ENCODE measurements at regions of chr11 and their contacts with region 1.

Region 1: DNA sequence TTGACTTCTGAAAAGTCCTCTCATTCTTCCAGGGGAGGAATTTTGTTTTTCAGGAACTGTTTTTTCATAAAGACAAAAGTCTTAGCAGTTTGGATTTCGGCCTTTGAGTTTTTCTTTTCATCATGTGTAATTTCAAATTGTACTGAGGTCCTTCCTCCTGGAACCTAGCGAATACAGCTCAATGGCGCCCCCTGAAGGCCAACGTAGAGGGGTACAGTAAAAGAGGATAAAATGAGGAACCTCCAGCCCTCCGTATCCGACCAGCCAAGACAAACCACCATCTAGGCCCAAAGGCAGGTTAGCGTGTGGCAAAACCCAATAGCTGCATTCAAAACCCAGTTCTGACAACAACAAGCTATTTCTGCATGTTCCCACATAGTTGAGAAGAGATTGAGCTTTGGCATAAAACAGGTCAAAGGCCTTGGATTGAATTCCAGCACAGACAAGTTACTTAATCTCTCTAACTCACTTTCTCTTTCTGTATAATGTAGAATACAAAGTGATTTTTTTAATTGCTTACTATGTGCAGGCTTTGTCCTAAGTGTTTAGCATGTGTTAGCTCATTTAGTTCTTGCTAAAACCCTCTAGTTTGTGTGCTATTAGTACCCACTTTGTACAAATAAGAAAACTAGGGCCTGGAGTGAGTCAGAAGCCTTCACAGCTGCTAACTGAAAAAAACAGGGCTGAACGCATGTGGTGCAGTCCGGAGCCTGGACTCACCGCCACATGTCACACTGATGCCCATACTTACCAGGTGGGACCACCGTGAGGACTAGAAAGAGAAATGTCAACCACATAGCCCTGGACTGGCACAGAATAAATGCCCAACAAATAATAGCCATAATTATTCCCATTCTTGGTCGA is 43.2 kb upstream of the ETS1 start:
- DNase-seq: peak; percentile 96
- ATAC-seq: peak; percentile 87
- H3K4me3 ChIP-seq: peak overlapping the region in 2 of 5 experiments; percentile 3 to 11
- H3K4me3 Mint-ChIP-seq: peak overlapping the region; percentile 65
- H3K27ac ChIP-seq: peak overlapping the region; percentile 43 to 90
- H3K27ac Mint-ChIP-seq: peak overlapping the region; percentile 93
- H3K4me1 ChIP-seq: peaks cover 66 to 68% of the 10 kb centered on the region in 2 donors
- H3K4me1 Mint-ChIP-seq: peaks cover 66% of the 10 kb centered on the region
- H3K27me3 ChIP-seq: no peaks in the 10 kb centered on the region
- H3K27me3 Mint-ChIP-seq: no peaks in the 10 kb centered on the region
- CTCF ChIP-seq: peak; percentile 86

Region 2: DNA sequence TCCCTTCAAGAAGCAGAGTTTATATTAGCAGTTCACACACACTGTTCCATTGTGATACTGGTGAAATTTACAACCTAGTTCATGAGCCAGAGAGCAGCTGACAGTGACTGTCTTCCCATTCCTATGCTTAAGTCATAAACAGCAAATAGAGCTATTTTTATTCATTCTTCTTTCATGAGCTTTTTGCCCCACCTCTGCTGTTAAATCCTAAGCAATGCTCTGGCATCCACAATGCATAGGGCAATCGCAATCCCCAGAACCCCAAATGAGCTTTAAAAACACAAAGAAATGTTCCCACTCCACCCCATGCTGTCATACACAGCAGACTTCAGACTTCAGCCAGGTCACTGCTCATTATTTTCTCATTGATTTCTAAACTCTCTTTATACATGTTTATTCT is 350.7 kb before region 1 on chr11:
- CTCF ChIA-PET with region 1: interaction called, 15 read pairs
- POLR2A ChIA-PET with region 1: no interaction called
- intact Hi-C with region 1: no loop called
- DNase-seq: no peak
- ATAC-seq: no peak
- H3K4me3 ChIP-seq: no peak overlapping the region
- H3K4me3 Mint-ChIP-seq: no peak overlapping the region
- H3K27ac ChIP-seq: no peak overlapping the region
- H3K27ac Mint-ChIP-seq: no peak overlapping the region
- H3K4me1 ChIP-seq: peaks cover 7 to 13% of the 10 kb centered on the region in 2 donors
- H3K4me1 Mint-ChIP-seq: peaks cover 17% of the 10 kb centered on the region
- H3K27me3 ChIP-seq: no peaks in the 10 kb centered on the region
- H3K27me3 Mint-ChIP-seq: no peaks in the 10 kb centered on the region
- CTCF ChIP-seq: no peak

Region 3: DNA sequence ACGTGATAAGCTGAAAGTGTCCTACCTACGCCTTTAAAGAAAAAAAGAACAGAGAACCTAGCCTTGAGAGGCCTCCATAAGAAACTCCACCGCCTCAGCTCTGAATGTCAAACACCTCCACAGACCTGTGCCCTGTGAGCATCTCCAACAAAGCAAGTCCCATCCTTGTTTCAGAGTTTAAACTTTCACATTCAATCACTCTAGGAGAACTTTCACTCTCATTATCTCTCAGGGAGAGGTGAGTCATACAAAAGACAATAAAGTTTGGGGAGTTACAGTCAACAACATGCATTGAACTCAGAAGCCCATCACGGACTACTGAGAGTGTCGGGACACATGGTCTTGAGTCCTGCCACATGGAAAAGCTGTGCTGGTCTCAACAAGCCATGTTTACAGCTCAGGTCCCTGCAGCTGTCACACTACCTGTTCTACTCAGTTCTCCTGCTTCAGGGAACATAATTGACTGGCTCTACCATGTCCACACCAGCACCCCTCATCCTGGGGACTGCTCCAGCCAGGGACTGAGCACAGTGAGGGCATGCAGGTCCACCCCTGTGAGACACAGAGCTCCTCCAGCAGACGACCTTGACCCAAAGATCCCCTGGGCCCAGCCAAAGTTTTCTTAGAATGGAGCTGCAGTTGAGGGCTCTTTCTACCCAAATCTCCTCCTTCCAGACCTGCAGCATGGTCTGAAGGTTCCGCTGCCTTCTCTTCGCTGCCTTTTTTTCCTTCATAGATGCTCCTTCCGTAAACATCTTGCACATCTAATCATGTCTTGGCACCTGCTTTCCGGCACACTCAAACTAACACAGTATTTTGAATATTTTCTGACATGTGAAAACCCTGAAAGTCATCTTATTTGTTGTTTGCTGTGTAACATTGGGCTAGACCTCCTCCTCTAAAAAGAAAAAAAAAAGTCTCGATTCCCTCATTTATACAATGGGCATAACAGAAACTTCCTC is 158.2 kb before region 1 on chr11:
- CTCF ChIA-PET with region 1: interaction called, 40 read pairs
- POLR2A ChIA-PET with region 1: interaction called, 14 read pairs
- intact Hi-C with region 1: loop called (anchors 2 kb)
- DNase-seq: peak; percentile 57
- ATAC-seq: peak; percentile 9
- H3K4me3 ChIP-seq: peak overlapping the region in 2 of 5 experiments; percentile 15 to 54
- H3K4me3 Mint-ChIP-seq: peak overlapping the region; percentile 71
- H3K27ac ChIP-seq: peak overlapping the region; percentile 74 to 90
- H3K27ac Mint-ChIP-seq: peak overlapping the region; percentile 89
- H3K4me1 ChIP-seq: peaks cover 98 to 100% of the 10 kb centered on the region in 2 donors
- H3K4me1 Mint-ChIP-seq: peaks cover 97% of the 10 kb centered on the region
- H3K27me3 ChIP-seq: no peaks in the 10 kb centered on the region
- H3K27me3 Mint-ChIP-seq: no peaks in the 10 kb centered on the region
- CTCF ChIP-seq: no peak

Region 4: GRCh38 chr11:128522055-128522942 is 108.3 kb before region 1 on chr11:
- CTCF ChIA-PET with region 1: interaction called, 82 read pairs
- POLR2A ChIA-PET with region 1: interaction called, 11 read pairs
- intact Hi-C with region 1: loop called (anchors 1 kb)
- DNase-seq: peak; percentile 92
- ATAC-seq: peak; percentile 91
- H3K4me3 ChIP-seq: peak overlapping the region; percentile 79 to 98 (median 90)
- H3K4me3 Mint-ChIP-seq: peak overlapping the region; percentile 92
- H3K27ac ChIP-seq: peak overlapping the region; percentile 82 to 90
- H3K27ac Mint-ChIP-seq: peak overlapping the region; percentile 98
- H3K4me1 ChIP-seq: peaks cover 31 to 34% of the 10 kb centered on the region in 2 donors
- H3K4me1 Mint-ChIP-seq: peaks cover 61% of the 10 kb centered on the region
- H3K27me3 ChIP-seq: no peaks in the 10 kb centered on the region
- H3K27me3 Mint-ChIP-seq: no peaks in the 10 kb centered on the region
- CTCF ChIP-seq: no peak

Region 5: GRCh38 chr11:128616161-128616560 is 14.4 kb before region 1 on chr11:
- CTCF ChIA-PET with region 1: interaction called, 625 read pairs
- POLR2A ChIA-PET with region 1: interaction called, 305 read pairs
- intact Hi-C with region 1: no loop called
- DNase-seq: no peak
- ATAC-seq: no peak
- H3K4me3 ChIP-seq: no peak overlapping the region
- H3K4me3 Mint-ChIP-seq: no peak overlapping the region
- H3K27ac ChIP-seq: no peak overlapping the region
- H3K27ac Mint-ChIP-seq: peak overlapping the region; percentile 50
- H3K4me1 ChIP-seq: peaks cover 74 to 79% of the 10 kb centered on the region in 2 donors
- H3K4me1 Mint-ChIP-seq: peaks cover 88% of the 10 kb centered on the region
- H3K27me3 ChIP-seq: no peaks in the 10 kb centered on the region
- H3K27me3 Mint-ChIP-seq: no peaks in the 10 kb centered on the region
- CTCF ChIP-seq: no peak

Region 6: GRCh38 chr11:128776424-128777284 is 146.1 kb after region 1 on chr11:
- CTCF ChIA-PET with region 1: interaction called, 18 read pairs
- POLR2A ChIA-PET with region 1: interaction called, 4 read pairs
- intact Hi-C with region 1: no loop called
- DNase-seq: peak; percentile 58
- ATAC-seq: peak; percentile 35
- H3K4me3 ChIP-seq: no peak overlapping the region
- H3K4me3 Mint-ChIP-seq: no peak overlapping the region
- H3K27ac ChIP-seq: no peak overlapping the region
- H3K27ac Mint-ChIP-seq: peak overlapping the region; percentile 51
- H3K4me1 ChIP-seq: peaks cover 25 to 36% of the 10 kb centered on the region in 2 donors
- H3K4me1 Mint-ChIP-seq: peaks cover 42% of the 10 kb centered on the region
- H3K27me3 ChIP-seq: no peaks in the 10 kb centered on the region
- H3K27me3 Mint-ChIP-seq: no peaks in the 10 kb centered on the region
- CTCF ChIP-seq: peak; percentile 60